Mammary epithelial cell (primary cell): ENCODE measurements at regions of chr2 and their contacts with region 1.

Region 1: DNA sequence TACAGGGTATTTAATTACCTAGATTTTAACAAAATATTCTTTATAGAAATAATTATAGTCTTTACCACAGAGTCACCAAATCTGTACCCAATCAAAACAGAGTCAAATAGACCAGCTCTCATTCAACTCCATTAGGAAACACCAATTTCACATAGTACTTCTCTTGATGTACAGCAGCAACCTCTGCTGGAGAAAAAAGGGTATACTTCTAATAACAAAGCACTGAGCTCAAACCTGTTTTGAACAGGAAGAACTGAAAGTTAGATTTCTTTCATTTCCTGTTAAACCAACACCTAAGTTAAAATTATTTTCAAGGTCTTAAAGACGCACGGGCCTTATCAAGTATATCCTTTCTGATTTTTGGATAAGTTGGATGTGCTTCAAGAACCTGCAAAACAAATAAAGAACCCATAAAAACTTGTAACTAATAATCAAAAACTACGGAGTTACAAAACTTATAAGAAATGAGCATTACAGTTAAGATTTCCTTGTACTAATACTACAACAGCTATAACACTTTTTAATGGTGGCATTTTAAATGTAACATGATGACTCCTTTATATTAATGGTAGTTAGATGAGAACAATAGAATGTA is 79.0 kb downstream of the TTC21B start:
- DNase-seq: peak; percentile 66
- H3K4me3 ChIP-seq: no peak overlapping the region
- H3K27ac ChIP-seq: no peak overlapping the region
- H3K4me1 ChIP-seq: peaks cover 7% of the 10 kb centered on the region
- H3K27me3 ChIP-seq: no peaks in the 10 kb centered on the region
- CTCF ChIP-seq: peak; percentile 69 to 79

Region 2: DNA sequence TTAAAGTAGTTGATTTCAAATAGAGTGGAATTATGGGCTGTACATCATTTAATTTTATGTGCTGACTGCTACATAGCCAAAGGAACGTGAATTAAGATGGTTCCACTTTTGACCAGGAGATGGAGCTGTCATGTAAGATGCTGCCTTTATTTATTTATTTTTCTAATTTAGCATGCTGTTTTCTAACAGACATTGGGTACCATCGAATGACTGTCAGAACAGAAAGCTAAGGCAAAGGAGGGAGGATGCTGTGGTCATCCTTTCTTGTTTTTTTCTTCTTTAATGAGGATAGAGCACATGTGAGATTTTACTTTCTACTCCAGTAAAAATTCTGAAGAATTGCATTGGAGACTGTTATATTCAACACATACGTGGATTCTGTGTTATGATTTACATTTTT is 635.3 kb before region 1 on chr2 and contains the start of gene SCN2A:
- CTCF ChIA-PET with region 1: interaction called, 3 read pairs
- dilution Hi-C with region 1: no loop called
- in situ Hi-C with region 1: no loop called
- intact Hi-C with region 1: loop called (anchors 10 kb)
- DNase-seq: peak; percentile 35
- H3K4me3 ChIP-seq: no peak within 1 kb of the TSS
- H3K27ac ChIP-seq: no peak within 1 kb of the TSS
- H3K4me1 ChIP-seq: no peaks in the 10 kb centered on the region
- H3K27me3 ChIP-seq: no peaks in the 10 kb centered on the region
- CTCF ChIP-seq: peak; percentile 74 to 75
- total RNA-seq, gene SCN2A: 2.8 to 7.0 TPM

Region 3: GRCh38 chr2:165558832-165559231 is 315.7 kb before region 1 on chr2:
- CTCF ChIA-PET with region 1: no interaction called
- dilution Hi-C with region 1: no loop called
- in situ Hi-C with region 1: no loop called
- intact Hi-C with region 1: loop called (anchors 10 kb)
- DNase-seq: no peak
- H3K4me3 ChIP-seq: no peak overlapping the region
- H3K27ac ChIP-seq: no peak overlapping the region
- H3K4me1 ChIP-seq: no peaks in the 10 kb centered on the region
- H3K27me3 ChIP-seq: no peaks in the 10 kb centered on the region
- CTCF ChIP-seq: peak in 1 of 2 donors; percentile 38

Region 4: GRCh38 chr2:165698444-165698894 is 176.1 kb before region 1 on chr2:
- CTCF ChIA-PET with region 1: no interaction called
- dilution Hi-C with region 1: no loop called
- in situ Hi-C with region 1: no loop called
- intact Hi-C with region 1: loop called (anchors 1 kb)
- DNase-seq: peak; percentile 47
- H3K4me3 ChIP-seq: no peak overlapping the region
- H3K27ac ChIP-seq: no peak overlapping the region
- H3K4me1 ChIP-seq: no peaks in the 10 kb centered on the region
- H3K27me3 ChIP-seq: no peaks in the 10 kb centered on the region
- CTCF ChIP-seq: peak; percentile 60 to 70

Region 5: GRCh38 chr2:165794536-165794928 is 80.0 kb before region 1 on chr2:
- CTCF ChIA-PET with region 1: interaction called, 7 read pairs
- dilution Hi-C with region 1: no loop called
- in situ Hi-C with region 1: loop called in 1 of 2 experiments (anchors 10 kb)
- intact Hi-C with region 1: loop called (anchors 1 kb)
- DNase-seq: peak; percentile 87
- H3K4me3 ChIP-seq: peak overlapping the region; percentile 74 to 96 (median 80)
- H3K27ac ChIP-seq: peak overlapping the region; percentile 96
- H3K4me1 ChIP-seq: peaks cover 15% of the 10 kb centered on the region
- H3K27me3 ChIP-seq: no peaks in the 10 kb centered on the region
- CTCF ChIP-seq: no peak

Region 6: GRCh38 chr2:165825041-165825440 is 49.5 kb before region 1 on chr2:
- CTCF ChIA-PET with region 1: no interaction called
- dilution Hi-C with region 1: no loop called
- in situ Hi-C with region 1: no loop called
- intact Hi-C with region 1: no loop called
- DNase-seq: peak; percentile 29
- H3K4me3 ChIP-seq: no peak overlapping the region
- H3K27ac ChIP-seq: no peak overlapping the region
- H3K4me1 ChIP-seq: peaks cover 4% of the 10 kb centered on the region
- H3K27me3 ChIP-seq: no peaks in the 10 kb centered on the region
- CTCF ChIP-seq: no peak